ENCODE measurements at regions of chr9 and their contacts with region 1.

Region 1: GRCh38 chr9:137551651-137552384 is at the start of gene MRPL41:
- DNase-seq: peak; percentile 90
- ATAC-seq: peak; percentile 72
- H3K4me3 ChIP-seq: peak within 1 kb of the TSS; percentile 84
- H3K27ac ChIP-seq: peak within 1 kb of the TSS; percentile 30; the same call in 1 of the 2 replicates
- H3K4me1 ChIP-seq: peaks cover 7% of the 10 kb centered on the region
- H3K27me3 ChIP-seq: no peaks in the 10 kb centered on the region
- CTCF ChIP-seq: no peak
- total RNA-seq, gene MRPL41: 159 and 193 TPM in 2 replicates

Region 2: GRCh38 chr9:137534256-137535117 is 17.3 kb before region 1 on chr9:
- CTCF ChIA-PET with region 1: interaction called, 10 read pairs
- POLR2A ChIA-PET with region 1: interaction called, 5 read pairs
- intact Hi-C with region 1: loop called (anchors 1 kb)
- DNase-seq: peak; percentile 79
- ATAC-seq: peak; percentile 95
- H3K4me3 ChIP-seq: no peak overlapping the region
- H3K27ac ChIP-seq: no peak overlapping the region
- H3K4me1 ChIP-seq: peaks cover 7% of the 10 kb centered on the region
- H3K27me3 ChIP-seq: no peaks in the 10 kb centered on the region
- CTCF ChIP-seq: peak; percentile 70

Region 3: GRCh38 chr9:137605121-137606004 is 53.5 kb after region 1 on chr9 and contains the start of gene ARRDC1:
- CTCF ChIA-PET with region 1: no interaction called
- POLR2A ChIA-PET with region 1: interaction called, 21 read pairs
- intact Hi-C with region 1: loop called (anchors 10 kb)
- DNase-seq: peak; percentile 91
- ATAC-seq: peak; percentile 84
- H3K4me3 ChIP-seq: peak within 1 kb of the TSS; percentile 75
- H3K27ac ChIP-seq: no peak within 1 kb of the TSS
- H3K4me1 ChIP-seq: peaks cover 9% of the 10 kb centered on the region
- H3K27me3 ChIP-seq: no peaks in the 10 kb centered on the region
- CTCF ChIP-seq: no peak
- total RNA-seq, gene ARRDC1: 77.5 and 78.0 TPM in 2 replicates

Measured in PC-3 (cell line).